Mucosa of descending colon (tissue), 3 donors: ENCODE measurements at regions of chr3 and their contacts with region 1.

Region 1: GRCh38 chr3:149512209-149512782 is 37.8 kb downstream of the TM4SF4 start:
- DNase-seq: peak in 2 of 3 donors; percentile 49 to 74
- ATAC-seq: peak; percentile 85
- H3K4me3 ChIP-seq: no peak overlapping the region
- H3K4me1 ChIP-seq: no peaks in the 10 kb centered on the region
- CTCF ChIP-seq: peak; percentile 33

Region 2: GRCh38 chr3:149717391-149718056 is 205.2 kb after region 1 on chr3:
- intact Hi-C with region 1: loop called (anchors 5 to 10 kb)
- DNase-seq: peak in 1 of 3 donors; percentile 78
- ATAC-seq: peak; percentile 56
- H3K4me3 ChIP-seq: no peak overlapping the region
- H3K4me1 ChIP-seq: no peaks in the 10 kb centered on the region
- CTCF ChIP-seq: peak; percentile 44

Region 3: DNA sequence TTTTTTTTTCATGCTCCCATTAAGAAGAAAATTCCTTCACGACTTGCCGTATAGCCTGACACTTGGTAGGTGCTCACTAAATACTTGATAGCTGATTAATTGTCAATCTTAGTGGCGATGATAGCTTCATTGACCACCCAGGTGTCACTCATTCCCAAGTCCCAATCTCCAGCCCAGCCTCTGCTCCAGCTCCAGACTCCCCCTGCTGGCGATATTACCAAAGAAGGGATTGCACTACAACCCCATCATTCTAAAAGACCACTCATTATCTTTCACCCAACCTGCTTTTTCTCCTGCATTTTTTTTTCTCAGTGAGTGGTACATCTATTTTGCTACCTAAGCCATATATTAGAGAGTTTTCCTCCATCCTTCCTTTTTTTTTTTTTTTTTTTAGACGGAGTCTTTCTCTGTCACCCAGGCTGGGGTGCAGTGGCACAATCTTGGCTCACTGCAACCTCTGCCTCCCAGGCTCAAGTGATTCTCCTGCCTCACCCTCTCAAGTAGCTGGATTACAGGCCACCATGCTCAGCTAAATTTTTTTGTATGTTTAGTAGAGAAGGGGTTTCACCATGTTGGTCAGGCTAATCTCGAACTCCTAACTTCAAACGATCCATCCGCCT is 259.5 kb after region 1 on chr3:
- intact Hi-C with region 1: loop called in 1 of 2 experiments (anchors 10 kb)
- DNase-seq: peak in 2 of 3 donors; percentile 31 to 77
- ATAC-seq: peak; percentile 48
- H3K4me3 ChIP-seq: no peak overlapping the region
- H3K4me1 ChIP-seq: no peaks in the 10 kb centered on the region
- CTCF ChIP-seq: no peak

Region 4: DNA sequence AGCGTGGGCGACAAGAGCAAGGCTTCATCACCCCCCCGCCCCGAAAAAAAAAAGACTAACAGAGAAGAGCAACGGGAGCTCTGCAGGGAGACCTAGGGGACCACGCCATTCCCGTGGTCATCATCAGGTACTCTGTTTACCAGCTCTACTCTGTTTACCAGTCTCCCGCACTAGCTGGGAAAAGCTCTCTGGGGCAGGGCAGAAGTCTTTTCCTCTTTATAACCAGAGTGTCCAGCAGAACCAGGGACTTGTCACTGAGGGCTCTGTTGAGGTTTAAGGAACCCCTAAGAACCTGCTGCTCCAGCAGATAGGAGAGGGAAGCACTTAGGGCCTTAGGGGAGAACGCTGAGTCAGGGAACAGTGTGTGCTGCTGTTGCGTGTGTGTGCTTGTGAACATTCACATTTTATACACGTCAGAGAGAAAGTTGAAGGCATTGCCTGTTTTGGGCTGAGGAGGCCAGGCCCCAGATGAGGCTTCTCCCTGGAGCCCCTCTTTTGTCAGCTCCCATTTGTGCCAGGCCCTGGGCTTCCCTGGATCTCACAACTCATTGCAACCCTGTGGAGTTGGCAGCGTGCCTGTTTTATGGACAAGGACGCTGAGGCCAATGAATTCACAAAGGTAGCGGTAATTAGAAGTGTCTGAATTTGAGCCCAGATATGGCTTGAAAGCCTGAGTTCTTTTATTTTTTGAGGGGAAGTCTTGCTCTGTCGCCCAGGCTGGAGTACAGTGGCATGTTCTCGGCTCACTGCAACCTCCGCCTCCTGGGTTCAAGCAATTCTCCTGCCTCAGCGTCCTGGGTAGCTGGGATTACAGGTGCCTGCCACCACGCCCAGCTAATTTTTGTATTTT is 1215.6 kb after region 1 on chr3:
- intact Hi-C with region 1: no loop called
- DNase-seq: peak in 1 of 3 donors; percentile 44
- ATAC-seq: peak; percentile 19
- H3K4me3 ChIP-seq: no peak overlapping the region
- H3K4me1 ChIP-seq: peaks cover 14% of the 10 kb centered on the region
- CTCF ChIP-seq: no peak